Cardiac septum (tissue), 1 donor: ENCODE measurements at regions of chr16 and their contacts with region 1.

Region 1: DNA sequence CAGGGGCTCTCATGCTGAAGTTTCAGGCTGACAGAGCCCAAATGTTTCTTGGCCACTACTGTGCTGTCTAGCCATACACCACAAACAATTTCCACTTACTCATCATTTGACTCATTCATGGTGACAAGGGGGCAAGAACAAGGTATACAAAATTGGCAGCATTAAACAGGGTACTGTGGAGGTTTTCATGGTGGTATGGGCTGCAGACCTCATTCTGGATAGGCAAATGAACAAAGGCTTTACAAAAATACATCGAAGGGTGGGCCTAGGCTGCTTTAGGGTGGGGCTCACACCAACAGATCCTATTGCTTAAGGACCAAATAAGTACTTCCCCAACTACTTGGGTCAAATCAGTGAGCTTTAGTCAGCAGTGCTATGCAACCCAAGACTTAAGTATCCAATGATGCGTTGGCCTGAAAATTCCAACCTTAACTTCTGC is 53.0 kb downstream of the N4BP1 start:
- DNase-seq: no peak

Region 2: DNA sequence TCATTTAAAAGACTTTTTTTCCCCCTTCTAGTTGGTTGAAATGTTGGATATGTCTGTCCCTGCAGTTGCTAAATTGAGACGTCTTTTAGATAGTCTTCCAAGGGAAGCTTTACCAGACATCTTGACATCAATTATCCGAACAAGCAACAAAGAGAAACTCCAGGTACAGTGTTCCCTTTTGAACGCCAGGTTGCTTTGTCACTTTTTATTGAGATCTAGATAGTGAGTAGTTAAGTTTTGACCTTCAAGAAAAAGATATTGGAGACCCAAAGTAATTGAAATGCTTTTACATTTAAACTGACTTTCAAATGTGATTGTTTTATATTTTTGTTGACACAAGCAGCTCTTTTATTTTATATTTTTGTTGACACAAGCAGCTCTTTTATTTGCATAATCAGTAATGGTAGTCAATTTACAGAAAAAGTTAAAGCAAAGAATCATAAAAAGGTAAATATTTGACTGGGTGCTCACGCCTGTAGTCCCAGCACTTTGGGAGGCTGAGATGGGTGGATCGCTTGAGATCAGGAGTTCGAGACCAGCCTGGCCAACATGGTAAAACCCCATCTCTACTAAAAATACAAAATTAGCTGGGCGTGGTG is 300.3 kb before region 1 on chr16:
- intact Hi-C with region 1: no loop called
- DNase-seq: no peak

Region 3: GRCh38 chr16:48592839-48593429 is 36.0 kb after region 1 on chr16:
- intact Hi-C with region 1: loop called (anchors 5 kb)
- DNase-seq: no peak

Region 4: GRCh38 chr16:48609652-48610029 is 52.7 kb after region 1 on chr16:
- intact Hi-C with region 1: loop called (anchors 5 kb)
- DNase-seq: peak; percentile 82